Activated T-helper 1 cell treated with anti-CD3 and anti-CD28 coated beads, Interleukin-12 subunit alpha, Interleukin-12 subunit beta, Interleukin-2, Interleukin-4 antibody, amounts not matched to agents 30 ng/mL and 10 ng/mL and 1 ng/mL, durations not matched to agents 14 hours and 24 hours and 36 hours (primary cell): ENCODE measurements at regions of chr3 and their contacts with region 1.

Region 1: DNA sequence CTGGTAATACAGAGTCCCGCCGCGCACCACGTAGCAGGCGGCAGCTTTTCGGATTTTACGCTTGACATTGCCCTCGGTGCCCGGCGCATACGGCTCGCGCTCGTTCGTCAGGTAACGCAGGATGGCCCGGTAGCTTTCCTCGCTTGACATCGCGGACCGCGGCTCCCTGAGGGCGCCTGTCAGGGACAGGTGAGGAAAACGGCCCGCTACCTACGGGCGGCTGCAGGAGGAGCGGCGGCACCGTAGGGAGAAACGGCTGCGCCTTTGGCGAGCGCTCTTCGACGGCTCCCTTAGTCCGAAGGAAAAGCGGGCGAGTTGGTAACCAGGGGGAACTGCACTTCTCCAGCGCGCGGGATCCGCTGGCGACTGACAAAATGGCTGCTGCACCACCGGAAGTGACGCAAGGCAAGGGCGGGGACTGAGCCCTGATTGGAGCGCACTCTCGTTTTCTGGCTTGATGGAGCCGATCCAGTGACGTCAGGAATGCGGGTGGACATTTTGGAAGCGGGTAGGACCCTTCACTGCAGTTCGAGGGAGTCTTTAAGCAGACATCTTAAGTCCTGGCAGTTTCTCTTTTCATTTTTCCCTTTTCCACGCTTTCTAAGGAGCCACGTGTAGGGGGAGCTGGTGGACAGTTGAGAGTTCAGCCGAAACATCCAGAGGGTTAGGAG is at the start of gene ZBTB11:
- DNase-seq: peak; percentile 99
- H3K4me3 Mint-ChIP-seq: peak within 1 kb of the TSS; percentile 96
- H3K27ac Mint-ChIP-seq: peak within 1 kb of the TSS; percentile 97
- H3K4me1 Mint-ChIP-seq: peaks cover 56% of the 10 kb centered on the region
- H3K27me3 Mint-ChIP-seq: no peaks in the 10 kb centered on the region
- total RNA-seq, gene ZBTB11: 29.0 and 31.9 TPM in 2 replicates

Region 2: GRCh38 chr3:101512646-101513418 is 164.1 kb before region 1 on chr3 and contains the start of gene SENP7:
- intact Hi-C with region 1: loop called (anchors 2 kb)
- DNase-seq: peak; percentile 72
- H3K4me3 Mint-ChIP-seq: peak within 1 kb of the TSS; percentile 94
- H3K27ac Mint-ChIP-seq: peak within 1 kb of the TSS; percentile 95
- H3K4me1 Mint-ChIP-seq: peaks cover 31% of the 10 kb centered on the region
- H3K27me3 Mint-ChIP-seq: no peaks in the 10 kb centered on the region
- total RNA-seq, gene SENP7: 9.1 and 10.7 TPM in 2 replicates

Region 3: DNA sequence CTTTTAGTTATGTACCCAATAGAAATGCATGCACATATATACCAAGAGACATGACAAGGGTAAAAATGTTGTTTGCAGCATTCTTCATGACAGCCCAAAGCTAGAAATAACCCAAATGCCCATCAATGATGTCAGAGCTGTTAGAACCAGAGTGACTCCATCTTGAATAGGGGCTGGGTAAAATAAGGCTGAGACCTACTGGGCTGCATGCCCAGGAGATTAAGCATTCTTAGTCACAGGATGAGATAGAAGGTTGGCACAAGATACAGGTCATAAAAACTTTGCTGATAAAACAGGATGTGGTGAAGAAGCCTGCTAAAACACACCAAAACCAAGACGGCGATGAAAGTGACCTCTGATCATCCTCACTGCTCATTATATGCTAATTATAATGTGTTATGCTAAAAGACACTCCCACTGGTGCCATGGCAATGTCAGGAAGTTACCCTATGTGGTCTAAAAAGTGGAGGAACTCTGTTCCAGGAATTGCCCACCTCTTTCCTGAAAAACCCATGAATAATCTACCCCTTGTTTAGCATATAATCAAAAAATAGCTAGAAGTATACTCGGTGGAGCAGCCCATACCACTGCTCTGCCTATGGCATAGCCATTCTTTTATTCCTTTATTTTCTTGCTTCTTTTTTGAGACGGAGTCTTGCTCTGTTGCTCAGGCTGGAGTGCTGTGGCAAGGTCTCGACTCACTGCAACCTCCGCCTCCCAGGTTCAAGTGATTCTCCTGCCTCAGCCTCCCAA is 32.9 kb before region 1 on chr3:
- intact Hi-C with region 1: loop called (anchors 1 kb)
- DNase-seq: peak; percentile 10
- H3K4me3 Mint-ChIP-seq: peak overlapping the region; percentile 7
- H3K27ac Mint-ChIP-seq: peak overlapping the region; percentile 53
- H3K4me1 Mint-ChIP-seq: peaks cover 27% of the 10 kb centered on the region
- H3K27me3 Mint-ChIP-seq: no peaks in the 10 kb centered on the region

Region 4: GRCh38 chr3:101724329-101725193 is 47.7 kb after region 1 on chr3 and contains the start of gene CEP97:
- intact Hi-C with region 1: loop called (anchors 1 kb)
- DNase-seq: peak; percentile 85
- H3K4me3 Mint-ChIP-seq: peak within 1 kb of the TSS; percentile 94
- H3K27ac Mint-ChIP-seq: peak within 1 kb of the TSS; percentile 96
- H3K4me1 Mint-ChIP-seq: peaks cover 54% of the 10 kb centered on the region
- H3K27me3 Mint-ChIP-seq: no peaks in the 10 kb centered on the region
- total RNA-seq, gene CEP97: 20.2 and 20.6 TPM in 2 replicates

Region 5: GRCh38 chr3:101791778-101792177 is 114.9 kb after region 1 on chr3:
- intact Hi-C with region 1: no loop called
- DNase-seq: no peak
- H3K4me3 Mint-ChIP-seq: no peak overlapping the region
- H3K27ac Mint-ChIP-seq: no peak overlapping the region
- H3K4me1 Mint-ChIP-seq: peaks cover 18% of the 10 kb centered on the region
- H3K27me3 Mint-ChIP-seq: no peaks in the 10 kb centered on the region